Activated CD4-positive, alpha-beta memory T cell treated with anti-CD3 and anti-CD28 coated beads for 36 hours (primary cell): ENCODE measurements at regions of chr1 and their contacts with region 1.

Region 1: GRCh38 chr1:63435161-63435560 is 67.7 kb downstream of the ALG6 start:
- DNase-seq: no peak
- H3K4me3 Mint-ChIP-seq: no peak overlapping the region
- H3K27ac Mint-ChIP-seq: no peak overlapping the region
- H3K4me1 Mint-ChIP-seq: no peaks in the 10 kb centered on the region
- H3K27me3 Mint-ChIP-seq: no peaks in the 10 kb centered on the region

Region 2: DNA sequence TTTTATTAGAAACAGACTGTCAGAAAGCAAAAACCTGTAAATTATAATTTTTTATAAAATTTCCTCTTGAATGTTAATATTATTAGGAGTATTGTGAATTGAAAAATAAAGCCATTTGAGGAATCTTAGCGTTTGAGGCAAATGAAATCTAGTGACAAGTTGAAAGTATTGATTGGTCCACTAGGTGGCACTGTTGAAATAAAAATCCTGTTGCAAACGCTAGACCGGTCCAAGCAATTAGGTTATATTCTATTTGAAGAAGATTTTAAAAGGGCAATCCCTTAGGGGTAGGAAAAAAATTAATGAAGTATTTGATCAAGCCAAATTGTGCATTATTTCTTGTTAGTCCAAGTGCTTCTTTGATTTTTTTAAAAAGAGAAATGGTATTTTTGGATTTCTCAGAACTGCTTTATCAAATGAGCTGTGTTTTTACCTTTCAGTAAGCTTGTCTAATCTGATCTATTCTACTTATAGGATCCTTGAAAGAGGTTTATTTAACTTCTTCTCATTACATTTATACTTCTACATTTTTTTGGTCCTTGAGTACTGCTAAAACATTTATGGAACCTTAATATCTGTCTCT is 593.5 kb before region 1 on chr1:
- CTCF ChIA-PET with region 1: no interaction called
- POLR2A ChIA-PET with region 1: no interaction called
- intact Hi-C with region 1: loop called (anchors 10 kb)
- DNase-seq: no peak
- H3K4me3 Mint-ChIP-seq: no peak overlapping the region
- H3K27ac Mint-ChIP-seq: no peak overlapping the region
- H3K4me1 Mint-ChIP-seq: no peaks in the 10 kb centered on the region
- H3K27me3 Mint-ChIP-seq: no peaks in the 10 kb centered on the region

Region 3: DNA sequence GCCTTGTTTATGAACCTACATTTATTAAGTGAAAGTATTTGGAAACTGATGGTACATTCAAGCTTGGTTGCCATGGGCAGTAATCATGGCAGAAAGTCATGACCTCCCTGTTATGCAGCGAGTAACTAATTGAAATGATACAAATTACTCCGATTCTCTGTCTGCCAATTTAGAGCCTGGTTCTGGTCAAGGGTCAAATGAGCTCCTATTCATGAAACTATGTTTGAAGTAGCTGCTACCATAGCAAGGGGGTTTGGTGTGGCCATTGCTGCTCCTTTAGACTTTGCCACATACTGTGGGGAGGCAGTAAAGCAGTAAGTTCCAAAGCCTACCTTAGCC is 300.0 kb before region 1 on chr1:
- CTCF ChIA-PET with region 1: no interaction called
- POLR2A ChIA-PET with region 1: no interaction called
- intact Hi-C with region 1: no loop called
- DNase-seq: no peak
- H3K4me3 Mint-ChIP-seq: no peak overlapping the region
- H3K27ac Mint-ChIP-seq: no peak overlapping the region
- H3K4me1 Mint-ChIP-seq: no peaks in the 10 kb centered on the region
- H3K27me3 Mint-ChIP-seq: peaks cover 11% of the 10 kb centered on the region